ENCODE measurements at regions of chr1 and their contacts with region 1.

Region 1: GRCh38 chr1:44543064-44543744 is 131.1 kb downstream of the TMEM53 start:
- DNase-seq: peak; percentile 75 to 98
- H3K4me3 ChIP-seq: peak overlapping the region in 3 of 4 experiments; percentile 16 to 56 (median 26); a peak in 5 of 8 replicates
- H3K27ac ChIP-seq: peak overlapping the region; percentile 91
- H3K4me1 ChIP-seq: peaks cover 21 to 51% (median 39%) of the 10 kb centered on the region in 4 experiments
- H3K27me3 ChIP-seq: peaks cover 0 to 10% (median 2%) of the 10 kb centered on the region in 4 experiments; a peak in 2 of 7 replicates
- CTCF ChIP-seq: peak in 2 of 3 experiments; percentile 17 to 49; a peak in 2 of 4 replicates
- EP300 ChIP-seq: peak in 1 of 2 experiments; percentile 90; a peak in 1 of 3 replicates
- POLR2A ChIP-seq: peak in 1 of 2 experiments; percentile 47; a peak in 1 of 3 replicates
- RAD21 ChIP-seq: peak; percentile 61 to 66

Region 2: DNA sequence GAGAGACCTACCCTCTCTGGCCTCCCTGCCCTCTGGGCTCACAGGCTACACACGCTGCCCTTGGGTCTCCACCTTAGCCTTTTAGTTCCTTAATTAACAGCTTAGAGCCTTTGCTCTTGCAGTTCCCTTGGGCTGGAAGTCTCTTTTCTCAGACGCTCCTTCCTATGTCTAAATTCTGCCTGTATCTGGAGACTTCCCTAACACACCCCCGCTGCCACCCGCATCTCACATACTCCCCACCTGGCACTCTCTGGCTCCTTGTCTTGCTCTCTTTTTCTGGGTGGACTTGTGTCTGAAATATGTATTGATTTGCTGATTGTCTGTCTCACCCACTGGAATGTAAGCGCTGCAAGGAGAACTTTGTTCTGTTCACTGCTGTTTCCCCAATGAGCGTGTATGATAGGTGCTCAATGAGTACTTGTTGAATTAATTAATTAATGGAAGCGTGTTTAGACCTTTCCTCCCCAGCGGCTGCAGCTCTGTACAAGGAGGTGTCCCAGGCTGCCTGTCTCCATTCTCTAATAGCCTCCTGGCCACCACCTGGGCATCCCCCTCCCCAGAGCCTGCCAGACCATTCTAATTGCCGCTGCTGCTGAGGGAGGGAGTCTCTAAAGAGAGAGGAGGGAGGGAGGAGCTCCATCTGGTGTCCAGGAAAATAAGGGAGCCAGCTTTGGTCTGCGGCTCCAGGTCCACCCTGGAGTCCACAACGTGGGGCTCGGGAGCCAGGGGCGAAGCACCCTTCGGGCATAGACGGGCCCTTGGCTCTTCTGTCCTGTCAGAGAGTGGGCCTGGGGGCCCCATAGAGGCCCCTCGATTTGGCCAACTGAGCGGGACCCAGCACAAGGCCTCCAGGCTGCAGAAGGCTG is 42.8 kb before region 1 on chr1:
- CTCF ChIA-PET with region 1: interaction called, 29 read pairs
- POLR2A ChIA-PET with region 1: interaction called, 21 read pairs
- DNase-seq: peak in 1 of 2 experiments; percentile 80
- H3K4me3 ChIP-seq: peak overlapping the region; percentile 17 to 53 (median 40); a peak in 6 of 8 replicates
- H3K27ac ChIP-seq: no peak overlapping the region
- H3K4me1 ChIP-seq: peaks cover 11 to 29% (median 24%) of the 10 kb centered on the region in 4 experiments
- H3K27me3 ChIP-seq: peaks cover 0 to 6% (median 0%) of the 10 kb centered on the region in 4 experiments; a peak in 4 of 7 replicates
- CTCF ChIP-seq: peak; percentile 41 to 45 (median 43)
- EP300 ChIP-seq: no peak
- POLR2A ChIP-seq: no peak
- RAD21 ChIP-seq: peak; percentile 59 to 69

Region 3: DNA sequence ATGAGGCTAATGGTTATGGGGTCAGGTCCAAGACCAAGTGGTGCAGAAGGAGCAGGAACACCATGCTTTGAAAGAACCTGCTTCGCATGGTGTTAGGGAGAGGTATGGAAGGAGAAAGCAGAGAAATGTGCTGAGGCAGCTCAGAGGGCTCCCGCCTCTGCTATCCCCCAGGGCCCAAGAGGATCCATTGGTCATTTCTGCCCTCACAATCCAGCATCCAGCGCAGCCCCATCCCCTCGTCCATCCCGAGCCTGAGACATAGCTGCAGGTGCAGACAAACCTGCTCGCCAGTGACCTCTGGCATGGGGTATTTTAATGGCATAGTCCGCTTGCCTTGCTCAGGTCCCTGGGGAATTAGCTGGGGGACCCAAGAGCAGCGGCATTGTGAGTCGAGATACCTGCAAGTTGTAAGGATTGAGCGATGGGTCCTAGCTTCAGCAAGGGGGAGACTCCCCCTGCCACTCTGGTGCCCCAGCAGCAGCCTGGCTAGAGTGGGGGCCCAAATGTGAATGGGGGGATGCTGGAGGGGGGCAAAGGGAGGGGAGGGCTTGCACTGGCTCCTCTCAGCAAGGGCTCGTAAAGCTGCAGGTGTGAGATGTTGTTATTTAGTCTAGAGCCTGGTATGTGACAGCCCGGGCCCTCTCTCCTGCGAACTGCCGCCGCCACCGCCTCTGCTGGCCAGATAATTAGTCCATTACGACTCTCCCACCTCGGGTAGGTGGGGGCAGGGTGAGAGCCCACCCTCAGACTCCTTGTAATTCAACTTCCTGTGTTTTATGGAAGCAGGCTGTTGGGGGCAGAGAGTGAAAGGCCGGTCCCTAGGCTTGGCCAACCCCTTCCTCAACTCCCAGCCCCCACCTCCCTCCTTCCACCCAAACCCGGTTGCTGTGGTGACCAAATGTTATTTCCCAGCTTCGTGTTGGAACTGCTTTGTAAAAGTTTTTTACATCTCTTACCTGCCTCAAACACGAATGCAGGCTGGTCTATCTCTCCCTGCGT is 19.3 kb before region 1 on chr1:
- CTCF ChIA-PET with region 1: interaction called, 5 read pairs
- POLR2A ChIA-PET with region 1: interaction called, 14 read pairs
- DNase-seq: peak; percentile 70 to 80
- H3K4me3 ChIP-seq: peak overlapping the region; percentile 37 to 59 (median 50); a peak in 7 of 8 replicates
- H3K27ac ChIP-seq: peak overlapping the region; percentile 39
- H3K4me1 ChIP-seq: peaks cover 19 to 34% (median 23%) of the 10 kb centered on the region in 4 experiments
- H3K27me3 ChIP-seq: no peaks in the 10 kb centered on the region
- CTCF ChIP-seq: peak; percentile 11 to 28 (median 22); a peak in 2 of 4 replicates
- EP300 ChIP-seq: no peak
- POLR2A ChIP-seq: peak in 1 of 2 experiments; percentile 64; a peak in 2 of 3 replicates
- RAD21 ChIP-seq: peak; percentile 29 to 42

Region 4: GRCh38 chr1:44531785-44532566 is 11.2 kb before region 1 on chr1:
- CTCF ChIA-PET with region 1: interaction called, 70 read pairs
- POLR2A ChIA-PET with region 1: interaction called, 26 read pairs
- DNase-seq: no peak
- H3K4me3 ChIP-seq: no peak overlapping the region
- H3K27ac ChIP-seq: no peak overlapping the region
- H3K4me1 ChIP-seq: peaks cover 15 to 26% (median 23%) of the 10 kb centered on the region in 4 experiments
- H3K27me3 ChIP-seq: no peaks in the 10 kb centered on the region
- CTCF ChIP-seq: no peak
- EP300 ChIP-seq: no peak
- POLR2A ChIP-seq: no peak
- RAD21 ChIP-seq: no peak

Region 5: GRCh38 chr1:44553771-44554170 is 10.6 kb after region 1 on chr1:
- CTCF ChIA-PET with region 1: interaction called, 18 read pairs
- POLR2A ChIA-PET with region 1: interaction called, 33 read pairs
- DNase-seq: no peak
- H3K4me3 ChIP-seq: no peak overlapping the region
- H3K27ac ChIP-seq: no peak overlapping the region
- H3K4me1 ChIP-seq: peaks cover 0 to 13% (median 3%) of the 10 kb centered on the region in 4 experiments; a peak in 3 of 7 replicates
- H3K27me3 ChIP-seq: no peaks in the 10 kb centered on the region
- CTCF ChIP-seq: no peak
- EP300 ChIP-seq: no peak
- POLR2A ChIP-seq: no peak
- RAD21 ChIP-seq: no peak

Region 6: GRCh38 chr1:44571712-44572571 is 28.7 kb after region 1 on chr1:
- CTCF ChIA-PET with region 1: interaction called, 37 read pairs
- POLR2A ChIA-PET with region 1: interaction called, 4 read pairs
- DNase-seq: no peak
- H3K4me3 ChIP-seq: no peak overlapping the region
- H3K27ac ChIP-seq: no peak overlapping the region
- H3K4me1 ChIP-seq: peaks cover 4 to 6% (median 5%) of the 10 kb centered on the region in 4 experiments; a peak in 6 of 7 replicates
- H3K27me3 ChIP-seq: no peaks in the 10 kb centered on the region
- CTCF ChIP-seq: peak in 2 of 3 experiments; percentile 39 to 68; a peak in 3 of 4 replicates
- EP300 ChIP-seq: no peak
- POLR2A ChIP-seq: no peak
- RAD21 ChIP-seq: peak; percentile 18 to 49; a peak in 2 of 4 replicates

Region 7: GRCh38 chr1:44631647-44632539 is 88.7 kb after region 1 on chr1:
- CTCF ChIA-PET with region 1: no interaction called
- POLR2A ChIA-PET with region 1: interaction called, 10 read pairs
- DNase-seq: peak in 1 of 2 experiments; percentile 91
- H3K4me3 ChIP-seq: peak overlapping the region; percentile 73 to 81 (median 78)
- H3K27ac ChIP-seq: peak overlapping the region; percentile 96
- H3K4me1 ChIP-seq: peaks cover 0 to 11% (median 4%) of the 10 kb centered on the region in 4 experiments; a peak in 6 of 7 replicates
- H3K27me3 ChIP-seq: no peaks in the 10 kb centered on the region
- CTCF ChIP-seq: no peak
- EP300 ChIP-seq: peak in 1 of 2 experiments; percentile 36; a peak in 1 of 3 replicates
- POLR2A ChIP-seq: peak; percentile 61 to 97
- RAD21 ChIP-seq: no peak

Region 8: DNA sequence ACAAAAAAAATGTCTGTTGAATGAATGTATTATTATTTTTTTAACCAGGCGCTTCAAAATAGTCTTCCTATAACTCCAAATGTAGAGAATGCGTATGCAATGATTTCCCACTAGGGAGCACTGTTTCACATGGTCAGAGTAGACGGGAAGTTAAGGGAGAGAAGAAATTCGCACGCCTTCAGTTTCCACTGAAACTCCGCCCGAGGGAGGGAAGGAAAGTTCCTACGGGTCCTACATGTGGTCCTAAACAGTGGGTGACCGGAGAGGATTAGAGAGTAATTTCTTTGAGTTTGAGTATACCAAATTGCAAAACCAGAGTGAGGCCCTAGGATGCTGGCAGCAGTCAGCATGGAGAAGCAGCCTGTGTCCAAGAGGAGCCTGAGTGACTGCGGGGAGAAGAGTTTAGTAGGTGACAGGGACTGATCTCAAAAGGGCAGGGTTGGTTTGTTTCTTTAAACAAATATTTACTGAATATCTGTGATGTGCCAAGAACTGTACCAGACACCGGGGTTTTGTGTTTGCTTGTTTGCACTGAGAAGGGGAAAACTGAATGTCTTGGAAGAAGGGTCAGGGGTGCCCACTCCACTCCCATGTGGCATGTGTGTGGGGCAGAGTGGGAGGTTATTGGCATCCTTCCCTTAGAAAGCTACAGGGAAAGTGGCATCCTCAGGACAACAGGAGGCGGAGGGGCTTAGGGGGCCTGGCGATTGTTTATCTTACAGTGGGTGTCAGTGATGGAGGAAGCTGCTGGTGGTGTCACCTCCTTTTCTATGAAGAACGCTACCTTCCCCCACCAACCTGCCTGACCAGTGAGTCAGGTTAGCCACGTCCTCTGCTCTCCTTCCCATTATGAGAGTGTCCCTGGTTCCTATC is 165.0 kb after region 1 on chr1:
- CTCF ChIA-PET with region 1: no interaction called
- POLR2A ChIA-PET with region 1: no interaction called
- DNase-seq: no peak
- H3K4me3 ChIP-seq: no peak overlapping the region
- H3K27ac ChIP-seq: no peak overlapping the region
- H3K4me1 ChIP-seq: peaks cover 0 to 5% (median 1%) of the 10 kb centered on the region in 4 experiments; a peak in 3 of 7 replicates
- H3K27me3 ChIP-seq: peaks cover 0 to 4% (median 0%) of the 10 kb centered on the region in 4 experiments; a peak in 1 of 7 replicates
- CTCF ChIP-seq: peak in 2 of 3 experiments; percentile 47 to 58; a peak in 2 of 4 replicates
- EP300 ChIP-seq: no peak
- POLR2A ChIP-seq: no peak
- RAD21 ChIP-seq: peak; percentile 48 to 53; a peak in 3 of 4 replicates

Measured in H1 (cell line).